Activated CD8-positive, alpha-beta T cell treated with anti-CD3 and anti-CD28 coated beads, Interleukin-2, amount 10 ng/mL, durations not matched to agents 7 days and 5 days (primary cell): ENCODE measurements at regions of chr1 and their contacts with region 1.

Region 1: GRCh38 chr1:157963713-157964112 is 29.7 kb upstream of the KIRREL1 start:
- DNase-seq: peak; percentile 60
- ATAC-seq: peak; percentile 64
- H3K4me3 Mint-ChIP-seq: no peak overlapping the region
- H3K27ac Mint-ChIP-seq: no peak overlapping the region
- H3K4me1 Mint-ChIP-seq: no peaks in the 10 kb centered on the region
- H3K27me3 Mint-ChIP-seq: peaks cover 2% of the 10 kb centered on the region

Region 2: GRCh38 chr1:158035976-158036583 is 72.4 kb after region 1 on chr1:
- CTCF ChIA-PET with region 1: interaction called, 10 read pairs
- POLR2A ChIA-PET with region 1: no interaction called
- DNase-seq: peak; percentile 24
- ATAC-seq: no peak
- H3K4me3 Mint-ChIP-seq: no peak overlapping the region
- H3K27ac Mint-ChIP-seq: no peak overlapping the region
- H3K4me1 Mint-ChIP-seq: no peaks in the 10 kb centered on the region
- H3K27me3 Mint-ChIP-seq: no peaks in the 10 kb centered on the region

Region 3: DNA sequence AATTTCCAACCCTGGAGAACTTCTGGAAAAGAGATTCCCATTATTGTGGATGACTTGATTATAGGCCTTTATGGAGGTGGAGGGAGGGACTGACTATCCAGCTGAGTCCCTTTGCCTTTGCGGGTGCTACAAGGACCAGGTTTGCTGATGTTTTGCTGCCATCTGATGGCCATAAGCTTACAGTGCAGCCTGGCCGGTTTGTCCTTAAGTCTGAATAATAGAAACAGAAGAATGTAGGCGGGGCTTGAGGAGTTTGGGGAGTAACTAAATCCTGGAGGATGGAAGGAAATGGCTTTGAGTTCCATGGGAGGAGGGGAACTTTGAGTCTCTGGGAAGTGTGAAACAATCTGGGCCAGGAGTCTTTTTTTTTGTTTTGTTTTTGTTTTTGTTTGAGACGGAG is 161.3 kb after region 1 on chr1:
- CTCF ChIA-PET with region 1: interaction called, 13 read pairs
- POLR2A ChIA-PET with region 1: no interaction called
- DNase-seq: peak; percentile 82
- ATAC-seq: peak; percentile 90
- H3K4me3 Mint-ChIP-seq: no peak overlapping the region
- H3K27ac Mint-ChIP-seq: no peak overlapping the region
- H3K4me1 Mint-ChIP-seq: peaks cover 11% of the 10 kb centered on the region
- H3K27me3 Mint-ChIP-seq: peaks cover 25% of the 10 kb centered on the region

Region 4: GRCh38 chr1:158285756-158286241 is 322.1 kb after region 1 on chr1:
- CTCF ChIA-PET with region 1: no interaction called
- POLR2A ChIA-PET with region 1: no interaction called
- DNase-seq: peak; percentile 40
- ATAC-seq: peak; percentile 57
- H3K4me3 Mint-ChIP-seq: peak overlapping the region; percentile 33
- H3K27ac Mint-ChIP-seq: peak overlapping the region; percentile 72
- H3K4me1 Mint-ChIP-seq: peaks cover 25% of the 10 kb centered on the region
- H3K27me3 Mint-ChIP-seq: peaks cover 14% of the 10 kb centered on the region